Lower leg skin (tissue), 4 donors: ENCODE measurements at regions of chr12 and their contacts with region 1.

Region 1: GRCh38 chr12:82954572-82954971 is 267.9 kb downstream of the TMTC2 start:
- DNase-seq: no peak
- H3K4me3 ChIP-seq: no peak overlapping the region
- CTCF ChIP-seq: no peak
- POLR2A ChIP-seq: no peak

Region 2: DNA sequence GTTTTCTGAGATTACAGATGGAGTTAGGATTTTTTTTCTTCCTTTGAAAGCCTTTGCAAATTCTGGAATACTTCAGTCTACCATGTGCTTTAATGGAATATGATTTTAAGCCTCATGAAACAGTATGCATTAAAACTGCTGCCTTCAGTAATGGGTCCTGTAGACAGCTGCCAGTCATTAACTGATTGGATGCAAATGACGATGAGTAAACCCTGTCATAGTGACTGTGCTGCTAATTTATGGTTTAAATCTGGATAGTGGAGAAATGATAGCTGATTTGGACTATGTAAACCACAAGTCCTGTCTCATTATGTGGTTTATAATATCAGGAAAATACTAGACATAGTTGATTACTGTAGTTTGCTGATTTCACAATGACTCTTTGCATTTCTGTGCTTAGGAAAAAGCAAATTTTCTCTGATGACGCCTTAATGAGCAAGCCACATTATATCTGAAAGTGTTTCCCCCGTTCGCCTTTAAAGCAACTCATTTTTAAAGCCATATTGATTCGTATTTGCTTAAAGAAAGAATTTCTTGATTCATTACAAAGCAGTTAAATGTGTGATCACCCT is 50.3 kb before region 1 on chr12:
- intact Hi-C with region 1: no loop called
- DNase-seq: no peak
- H3K4me3 ChIP-seq: no peak overlapping the region
- CTCF ChIP-seq: no peak
- POLR2A ChIP-seq: no peak

Region 3: GRCh38 chr12:82980616-82981015 is 26.0 kb after region 1 on chr12:
- intact Hi-C with region 1: loop called (anchors 1 kb)
- DNase-seq: no peak
- H3K4me3 ChIP-seq: no peak overlapping the region
- CTCF ChIP-seq: no peak
- POLR2A ChIP-seq: no peak